BJ (cell line): ENCODE measurements at regions of chr14 and their contacts with region 1.

Region 1: DNA sequence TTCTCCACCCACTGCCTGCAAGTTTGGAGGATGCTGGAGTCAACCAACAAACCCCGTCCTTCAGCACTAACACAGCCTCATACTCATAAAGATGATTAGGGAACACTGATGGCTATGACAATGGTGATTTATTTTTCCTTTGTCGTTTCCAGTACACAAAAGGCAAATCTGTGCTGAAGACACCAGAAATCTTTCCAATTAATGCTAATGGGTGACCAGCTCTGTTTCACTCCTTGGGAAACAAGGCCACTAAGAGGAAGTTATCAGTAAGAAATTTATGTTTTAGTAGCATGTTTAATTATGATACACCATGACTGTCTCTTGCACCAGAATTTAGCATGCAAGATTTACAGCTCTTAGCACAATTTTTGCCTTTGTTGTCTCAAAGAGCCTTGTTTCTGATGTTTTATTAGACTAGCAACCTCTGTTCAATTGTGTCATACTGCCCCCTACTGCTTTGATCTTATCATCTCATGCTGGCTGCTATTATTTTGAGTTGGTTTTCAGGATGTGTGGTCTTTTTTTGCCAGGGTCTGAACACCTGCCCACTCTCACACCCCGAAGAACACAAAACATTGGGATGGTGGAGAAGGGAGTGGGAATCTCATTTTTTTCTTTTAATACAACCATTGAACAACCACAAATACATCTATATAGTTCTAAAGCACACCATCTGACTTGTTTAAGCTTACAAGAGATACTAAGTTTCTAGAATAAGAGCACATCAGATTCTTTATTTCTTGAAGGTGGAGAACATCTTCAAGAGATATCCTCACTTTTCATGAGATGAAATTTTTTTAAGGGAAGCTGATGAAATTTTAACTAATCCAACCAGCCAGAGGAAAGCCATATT is 160.9 kb downstream of the SPTSSA start:
- DNase-seq: no peak
- H3K4me3 ChIP-seq: no peak overlapping the region
- H3K27me3 ChIP-seq: no peaks in the 10 kb centered on the region
- CTCF ChIP-seq: peak; percentile 55

Region 2: GRCh38 chr14:33839193-33840076 is 461.7 kb before region 1 on chr14:
- CTCF ChIA-PET with region 1: interaction called, 16 read pairs
- POLR2A ChIA-PET with region 1: no interaction called
- DNase-seq: no peak
- H3K4me3 ChIP-seq: no peak overlapping the region
- H3K27me3 ChIP-seq: peaks cover 3% of the 10 kb centered on the region; the same call in 1 of the 2 replicates
- CTCF ChIP-seq: peak; percentile 81

Region 3: GRCh38 chr14:34003082-34003668 is 297.9 kb before region 1 on chr14:
- CTCF ChIA-PET with region 1: no interaction called
- POLR2A ChIA-PET with region 1: interaction called, 18 read pairs
- DNase-seq: no peak
- H3K4me3 ChIP-seq: no peak overlapping the region
- H3K27me3 ChIP-seq: no peaks in the 10 kb centered on the region; the same call in 1 of the 2 replicates
- CTCF ChIP-seq: no peak

Region 4: DNA sequence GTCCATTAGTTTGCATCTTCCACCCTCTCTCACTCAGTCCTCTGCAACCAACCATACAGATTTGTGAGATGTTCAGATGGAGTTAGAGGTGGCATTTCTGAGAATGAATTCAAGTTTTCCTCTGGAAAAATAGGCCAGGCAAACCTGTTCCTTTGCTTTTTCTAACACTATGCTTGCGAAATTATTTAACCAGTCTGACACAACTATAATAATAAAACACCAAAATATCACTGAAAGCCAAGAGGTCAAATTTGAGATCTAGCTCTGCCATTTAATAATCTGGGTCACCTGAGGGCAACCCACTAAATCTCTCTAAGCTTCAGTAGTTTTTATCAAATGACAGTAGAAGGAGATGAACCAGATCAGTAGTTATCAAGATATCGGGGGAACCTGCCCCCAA is 20.5 kb before region 1 on chr14:
- CTCF ChIA-PET with region 1: no interaction called
- POLR2A ChIA-PET with region 1: no interaction called
- DNase-seq: no peak
- H3K4me3 ChIP-seq: no peak overlapping the region
- H3K27me3 ChIP-seq: no peaks in the 10 kb centered on the region
- CTCF ChIP-seq: no peak

Region 5: GRCh38 chr14:34322940-34323418 is 21.9 kb after region 1 on chr14:
- CTCF ChIA-PET with region 1: interaction called, 12 read pairs
- POLR2A ChIA-PET with region 1: no interaction called
- DNase-seq: no peak
- H3K4me3 ChIP-seq: no peak overlapping the region
- H3K27me3 ChIP-seq: peaks cover 2% of the 10 kb centered on the region; the same call in 1 of the 2 replicates
- CTCF ChIP-seq: peak; percentile 77